CD8-positive, alpha-beta T cell (primary cell): ENCODE measurements at regions of chr9 and their contacts with region 1.

Region 1: GRCh38 chr9:4297151-4297785 is 2.6 kb downstream of the GLIS3 start:
- DNase-seq: peak in 6 of 9 experiments; percentile 27 to 68 (median 33)
- ATAC-seq: peak; percentile 18
- H3K4me3 ChIP-seq: peak overlapping the region; percentile 67 to 81
- H3K4me3 Mint-ChIP-seq: peak overlapping the region; percentile 97
- H3K27ac ChIP-seq: peak overlapping the region in 1 of 2 experiments; percentile 73
- H3K27ac Mint-ChIP-seq: peak overlapping the region; percentile 87
- H3K4me1 ChIP-seq: peaks cover 12% of the 10 kb centered on the region
- H3K4me1 Mint-ChIP-seq: peaks cover 21% of the 10 kb centered on the region
- H3K27me3 ChIP-seq: peaks cover 0 to 12% of the 10 kb centered on the region in 2 experiments
- H3K27me3 Mint-ChIP-seq: peaks cover 43% of the 10 kb centered on the region
- CTCF ChIP-seq: no peak

Region 2: GRCh38 chr9:4235871-4236804 is 61.1 kb before region 1 on chr9:
- CTCF ChIA-PET with region 1: no interaction called
- POLR2A ChIA-PET with region 1: no interaction called
- intact Hi-C with region 1: loop called in 1 of 2 experiments (anchors 5 kb)
- DNase-seq: no peak
- ATAC-seq: no peak
- H3K4me3 ChIP-seq: no peak overlapping the region
- H3K4me3 Mint-ChIP-seq: no peak overlapping the region
- H3K27ac ChIP-seq: no peak overlapping the region
- H3K27ac Mint-ChIP-seq: no peak overlapping the region
- H3K4me1 ChIP-seq: peaks cover 27% of the 10 kb centered on the region
- H3K4me1 Mint-ChIP-seq: peaks cover 32% of the 10 kb centered on the region
- H3K27me3 ChIP-seq: no peaks in the 10 kb centered on the region
- H3K27me3 Mint-ChIP-seq: peaks cover 2% of the 10 kb centered on the region
- CTCF ChIP-seq: no peak

Region 3: GRCh38 chr9:4489919-4490704 is 192.8 kb after region 1 on chr9 and contains the start of gene SLC1A1:
- CTCF ChIA-PET with region 1: no interaction called
- POLR2A ChIA-PET with region 1: no interaction called
- intact Hi-C with region 1: loop called in 1 of 2 experiments (anchors 10 kb)
- DNase-seq: peak in 5 of 9 experiments; percentile 19 to 52 (median 40)
- ATAC-seq: peak; percentile 65
- H3K4me3 ChIP-seq: peak within 1 kb of the TSS; percentile 34 to 65
- H3K4me3 Mint-ChIP-seq: peak within 1 kb of the TSS; percentile 84
- H3K27ac ChIP-seq: no peak within 1 kb of the TSS
- H3K27ac Mint-ChIP-seq: no peak within 1 kb of the TSS
- H3K4me1 ChIP-seq: peaks cover 23% of the 10 kb centered on the region
- H3K4me1 Mint-ChIP-seq: peaks cover 29% of the 10 kb centered on the region
- H3K27me3 ChIP-seq: peaks cover 12 to 29% of the 10 kb centered on the region in 2 experiments
- H3K27me3 Mint-ChIP-seq: peaks cover 45% of the 10 kb centered on the region
- CTCF ChIP-seq: no peak
- total RNA-seq, gene SLC1A1: not detected